Head of caudate nucleus (tissue), 42 donors: ENCODE measurements at regions of chr10 and their contacts with region 1.

Region 1: DNA sequence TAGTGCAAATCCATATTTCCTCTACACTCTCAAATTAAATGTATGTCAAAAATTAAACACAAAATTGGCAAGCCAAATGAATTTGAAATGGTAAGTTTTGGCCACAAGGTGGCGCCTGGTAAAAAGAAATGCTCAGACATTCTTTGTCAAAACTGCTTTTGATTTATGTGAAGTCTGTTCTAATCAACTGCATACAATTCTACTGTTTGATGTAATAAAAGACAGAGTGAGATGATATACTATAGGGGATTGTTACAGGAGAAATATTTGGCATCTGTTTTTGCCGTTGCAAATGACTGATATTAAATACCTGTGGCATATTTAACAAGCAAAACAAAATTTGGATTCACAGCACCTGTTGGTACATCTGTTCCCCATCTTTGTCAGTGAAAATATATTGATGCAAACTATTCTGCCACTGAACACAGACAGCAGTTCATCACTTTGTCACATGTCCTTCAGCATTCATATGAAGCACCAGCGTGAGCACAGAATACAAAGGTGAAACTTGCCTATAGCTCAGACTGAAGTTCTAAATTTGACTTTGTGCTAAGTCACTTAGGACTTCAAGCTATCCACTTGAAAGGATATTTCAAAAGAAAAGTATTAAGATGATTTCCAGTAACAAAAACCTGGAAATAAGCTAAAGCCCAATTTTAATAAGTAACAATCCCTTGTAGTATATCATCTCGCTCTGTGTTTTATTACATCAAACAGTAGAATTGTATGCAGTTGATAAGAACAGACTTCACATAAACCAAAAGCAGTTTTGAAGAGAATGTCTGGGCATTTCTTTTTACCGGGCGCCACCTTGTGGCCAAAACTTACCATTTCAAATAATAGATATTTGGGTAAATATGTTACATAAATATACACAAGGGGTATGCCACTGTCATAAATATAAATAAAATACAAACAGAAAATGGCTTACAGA is 10.2 kb upstream of the CH25H start:
- DNase-seq: peak in 40 of 42 donors; percentile 23 to 94 (median 73)

Region 2: DNA sequence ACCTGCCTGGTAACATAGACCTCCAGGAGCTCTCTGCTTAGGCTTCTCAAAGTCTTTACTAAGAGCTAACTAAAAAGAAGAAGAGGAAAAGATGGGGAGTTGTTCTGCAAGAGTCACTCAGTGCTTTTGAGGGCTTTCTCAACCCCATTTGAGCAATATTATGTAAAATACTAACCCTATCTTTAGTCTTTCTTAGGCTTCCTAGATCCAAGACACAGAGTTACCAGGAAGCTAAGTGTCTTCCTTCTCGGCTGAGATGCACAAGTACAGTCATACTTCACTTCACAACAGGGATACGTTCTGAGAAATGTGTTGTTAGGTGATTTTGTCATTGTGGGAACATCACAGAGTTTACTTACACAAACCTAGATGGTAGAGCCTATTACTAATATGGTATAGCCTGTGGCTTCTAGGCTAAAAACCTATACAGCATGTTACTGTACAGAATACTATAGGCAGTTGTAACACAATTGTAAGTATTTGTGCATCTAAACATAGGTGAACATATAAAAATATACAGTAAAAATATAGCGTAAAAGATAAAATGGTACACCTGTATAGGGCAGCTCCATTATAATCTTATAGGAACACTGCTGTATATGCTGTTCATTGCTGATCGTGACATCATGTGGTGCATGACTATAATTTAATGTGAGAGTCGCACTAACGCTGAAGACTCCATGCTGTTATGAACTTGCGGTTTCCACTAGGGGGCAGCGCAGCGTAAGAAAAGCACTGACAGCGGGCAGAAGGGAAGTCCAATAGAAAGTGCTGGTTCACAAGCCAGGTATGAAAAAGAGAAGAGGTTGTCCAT is 382.0 kb before region 1 on chr10:
- intact Hi-C with region 1: loop called (anchors 10 kb)
- DNase-seq: peak; percentile 69 to 93 (median 86)

Region 3: DNA sequence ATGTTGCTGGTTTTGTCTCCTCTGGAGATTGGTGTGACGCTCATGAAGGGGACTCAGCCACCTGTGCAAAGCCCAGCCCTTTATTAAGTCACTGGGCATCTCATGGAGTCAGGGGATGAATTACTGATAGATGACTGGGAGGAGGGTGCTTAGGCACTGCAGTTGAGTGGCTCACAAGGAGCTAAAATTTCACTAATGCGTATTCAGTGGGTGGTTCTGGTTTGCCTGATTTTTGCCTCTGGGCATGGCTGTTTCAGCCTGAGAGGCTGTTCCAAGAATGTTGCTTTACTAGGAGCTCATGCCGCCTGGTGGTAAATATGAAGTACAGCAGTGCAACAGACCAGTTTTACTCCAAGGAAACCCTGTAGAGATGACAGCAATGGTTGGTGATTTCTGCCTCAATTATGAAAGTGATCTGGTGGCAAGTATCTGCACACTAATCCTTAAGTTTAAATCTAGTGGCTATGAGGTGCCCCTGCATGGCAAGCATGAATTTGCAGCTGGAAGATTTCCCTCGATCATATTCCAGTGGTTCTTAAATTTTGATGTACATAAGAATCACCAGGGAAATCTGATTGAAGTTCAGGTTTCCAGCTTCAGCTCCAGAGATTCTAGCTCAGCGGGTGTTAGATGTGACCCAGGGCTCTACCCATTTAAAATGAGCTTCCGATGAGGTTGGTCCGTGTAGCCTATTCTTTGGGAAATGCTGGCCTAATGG is 284.6 kb before region 1 on chr10:
- intact Hi-C with region 1: loop called (anchors 5 kb)
- DNase-seq: peak in 35 of 42 donors; percentile 13 to 78 (median 50)

Region 4: GRCh38 chr10:89029785-89030437 is 187.4 kb before region 1 on chr10:
- intact Hi-C with region 1: loop called (anchors 2 kb)
- DNase-seq: peak; percentile 62 to 94 (median 84)

Region 5: GRCh38 chr10:89251409-89252224 is 34.3 kb after region 1 on chr10 and contains the start of gene LIPA:
- intact Hi-C with region 1: loop called (anchors 5 kb)
- DNase-seq: peak; percentile 92 to 99 (median 97)

Region 6: DNA sequence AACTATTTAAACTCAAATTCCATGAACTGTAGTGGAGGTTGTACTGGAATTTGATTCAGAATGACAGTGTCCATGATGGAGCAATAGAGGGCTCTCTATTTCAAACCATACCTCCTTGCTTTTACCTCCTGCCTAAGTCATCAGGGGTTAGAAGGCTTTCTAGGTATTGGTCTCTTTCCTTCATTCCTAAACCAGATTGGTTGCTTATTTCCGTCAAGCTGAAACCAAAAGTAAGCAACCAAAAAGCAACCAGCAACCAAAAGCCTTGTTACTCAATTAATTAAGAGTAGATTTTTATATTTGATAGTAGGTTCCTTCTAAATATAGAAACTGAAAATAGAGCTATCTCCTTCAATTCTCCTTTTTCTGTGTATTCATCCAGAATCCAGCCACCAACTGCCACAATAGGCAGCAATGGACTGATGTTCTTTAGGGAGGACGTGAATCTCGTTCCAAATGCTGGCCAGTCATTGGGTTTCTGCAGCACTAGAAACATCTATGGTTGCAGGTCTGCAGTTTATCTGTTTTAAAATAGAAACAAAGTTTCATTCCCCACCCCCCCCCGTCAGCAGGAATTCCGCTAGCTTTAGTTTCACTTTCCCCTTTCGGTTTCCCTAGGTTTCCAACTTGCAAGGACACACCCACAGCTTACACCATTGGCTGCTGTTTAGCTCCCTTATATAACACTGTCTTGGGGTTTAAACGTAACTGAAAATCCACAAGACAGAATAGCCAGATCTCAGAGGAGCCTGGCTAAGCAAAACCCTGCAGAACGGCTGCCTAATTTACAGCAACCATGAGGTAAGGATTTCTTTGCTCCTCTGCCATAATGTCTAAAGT is 174.8 kb after region 1 on chr10 and contains the start of gene IFIT1:
- intact Hi-C with region 1: loop called (anchors 5 kb)
- DNase-seq: peak in 29 of 42 donors; percentile 14 to 88 (median 65)

Region 7: DNA sequence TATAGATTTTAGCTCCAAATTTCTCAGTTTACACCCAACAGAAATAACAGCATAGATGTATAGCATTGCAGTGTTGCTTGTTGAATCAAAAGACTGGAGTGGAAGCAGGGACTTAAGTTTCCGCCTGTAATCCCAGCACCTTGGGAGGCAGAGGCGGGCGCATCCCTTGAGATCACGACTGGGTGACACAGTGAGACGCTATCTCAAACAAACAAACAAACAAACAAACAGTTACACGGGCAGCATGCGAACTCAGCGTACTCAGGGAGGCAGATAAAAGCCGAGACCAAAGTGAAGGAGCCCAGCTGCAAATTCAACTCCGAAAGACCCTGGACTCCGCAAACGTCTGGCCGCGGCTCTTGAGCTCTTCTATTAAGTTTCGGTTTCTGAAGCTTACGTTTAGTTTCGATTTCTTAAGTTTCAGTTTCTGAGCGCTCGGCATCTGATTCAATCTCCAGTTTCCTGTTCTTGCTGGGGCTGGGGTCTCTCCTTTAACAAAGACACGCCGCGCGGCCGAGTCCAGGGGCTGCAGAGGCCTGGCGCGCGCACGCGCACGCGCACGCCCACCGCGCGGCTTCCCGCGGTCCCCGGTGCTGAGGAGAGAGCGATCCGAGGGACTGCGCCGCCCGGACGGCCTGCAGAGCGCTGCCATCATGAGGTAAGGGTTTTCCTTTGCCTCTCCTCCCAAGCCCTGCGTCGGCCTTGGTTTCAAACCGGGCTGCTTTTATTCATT is 197.0 kb after region 1 on chr10 and contains the start of gene IFIT5:
- intact Hi-C with region 1: no loop called
- DNase-seq: peak; percentile 48 to 90 (median 79)